Activated T-helper 1 cell treated with anti-CD3 and anti-CD28 coated beads, Interleukin-12 subunit alpha, Interleukin-12 subunit beta, Interleukin-2, Interleukin-4 antibody, amounts not matched to agents 30 ng/mL and 10 ng/mL and 1 ng/mL, durations not matched to agents 14 hours and 24 hours and 36 hours (primary cell): ENCODE measurements at regions of chr18 and their contacts with region 1.

Region 1: GRCh38 chr18:9209279-9209678 is 72.7 kb downstream of the ANKRD12 start:
- DNase-seq: no peak
- H3K4me3 Mint-ChIP-seq: no peak overlapping the region
- H3K27ac Mint-ChIP-seq: no peak overlapping the region
- H3K4me1 Mint-ChIP-seq: peaks cover 13% of the 10 kb centered on the region
- H3K27me3 Mint-ChIP-seq: no peaks in the 10 kb centered on the region

Region 2: DNA sequence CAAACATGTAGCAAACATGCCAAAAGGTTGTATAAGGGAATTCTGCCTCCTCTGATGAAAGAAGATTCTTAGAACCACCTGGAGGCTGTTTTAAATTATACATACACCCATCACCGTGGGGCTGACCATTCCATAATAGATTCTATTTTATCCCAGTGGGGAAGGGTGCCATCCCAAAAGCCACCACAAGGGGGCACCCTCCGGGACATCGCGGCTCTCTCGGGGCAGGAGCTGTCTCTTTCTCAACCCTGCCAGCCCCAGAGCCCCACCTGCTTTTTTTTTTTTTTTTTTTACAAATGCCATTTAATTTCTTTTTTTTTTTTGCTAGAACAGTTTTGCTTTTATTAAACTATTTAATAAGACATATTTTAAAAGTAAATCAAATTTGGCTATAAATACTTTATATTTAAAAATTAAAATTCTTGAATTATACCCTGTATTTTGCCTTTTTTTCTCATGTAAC is 512.5 kb before region 1 on chr18:
- intact Hi-C with region 1: no loop called
- DNase-seq: peak; percentile 63
- H3K4me3 Mint-ChIP-seq: no peak overlapping the region
- H3K27ac Mint-ChIP-seq: no peak overlapping the region
- H3K4me1 Mint-ChIP-seq: no peaks in the 10 kb centered on the region
- H3K27me3 Mint-ChIP-seq: peaks cover 25% of the 10 kb centered on the region

Region 3: GRCh38 chr18:9066817-9067306 is 142.4 kb before region 1 on chr18:
- intact Hi-C with region 1: loop called (anchors 5 kb)
- DNase-seq: no peak
- H3K4me3 Mint-ChIP-seq: no peak overlapping the region
- H3K27ac Mint-ChIP-seq: peak overlapping the region; percentile 69
- H3K4me1 Mint-ChIP-seq: peaks cover 42% of the 10 kb centered on the region
- H3K27me3 Mint-ChIP-seq: no peaks in the 10 kb centered on the region